AG04449 (cell line): ENCODE measurements at regions of chr14 and their contacts with region 1.

Region 1: GRCh38 chr14:22872033-22872832 is 693 bp downstream of the LRP10 start:
- DNase-seq: no peak
- H3K4me3 ChIP-seq: peak overlapping the region; percentile 81
- CTCF ChIP-seq: peak; percentile 87

Region 2: DNA sequence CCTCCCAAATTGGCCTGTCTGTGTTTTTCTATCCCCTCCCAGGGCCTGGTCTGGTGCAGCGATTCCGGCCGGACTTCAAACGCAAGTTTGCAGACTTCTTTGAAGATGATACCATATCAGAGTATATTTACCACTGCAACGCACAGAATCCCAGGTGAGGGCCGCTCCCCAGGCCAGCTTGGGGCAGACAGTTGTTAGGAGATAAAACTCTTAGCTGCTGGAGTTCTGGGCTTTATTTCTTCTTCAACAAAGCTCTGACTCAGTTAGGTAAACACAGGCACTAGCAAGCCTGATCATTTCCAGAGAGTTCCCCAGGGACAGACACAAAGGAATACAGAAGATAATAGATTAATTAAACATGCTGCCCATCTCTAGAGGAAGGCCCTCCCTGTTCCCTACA is 265.9 kb before region 1 on chr14:
- CTCF ChIA-PET with region 1: no interaction called
- POLR2A ChIA-PET with region 1: no interaction called
- DNase-seq: no peak
- H3K4me3 ChIP-seq: no peak overlapping the region
- CTCF ChIP-seq: no peak

Region 3: GRCh38 chr14:22689186-22689585 is 183.0 kb before region 1 on chr14:
- CTCF ChIA-PET with region 1: no interaction called
- POLR2A ChIA-PET with region 1: no interaction called
- DNase-seq: peak; percentile 92
- H3K4me3 ChIP-seq: no peak overlapping the region
- CTCF ChIP-seq: no peak

Region 4: GRCh38 chr14:22822571-22823098 is 49.6 kb before region 1 on chr14:
- CTCF ChIA-PET with region 1: interaction called, 34 read pairs
- POLR2A ChIA-PET with region 1: no interaction called
- DNase-seq: no peak
- H3K4me3 ChIP-seq: peak overlapping the region; percentile 24
- CTCF ChIP-seq: peak; percentile 78

Region 5: GRCh38 chr14:22836301-22837113 is 35.7 kb before region 1 on chr14 and contains the start of gene MMP14:
- CTCF ChIA-PET with region 1: interaction called, 13 read pairs
- POLR2A ChIA-PET with region 1: interaction called, 3 read pairs
- DNase-seq: no peak
- H3K4me3 ChIP-seq: peak within 1 kb of the TSS; percentile 90
- CTCF ChIP-seq: peak; percentile 58

Region 6: GRCh38 chr14:22886500-22887259 is 14.4 kb after region 1 on chr14:
- CTCF ChIA-PET with region 1: interaction called, 189 read pairs
- POLR2A ChIA-PET with region 1: interaction called, 6 read pairs
- DNase-seq: no peak
- H3K4me3 ChIP-seq: peak overlapping the region; percentile 57
- CTCF ChIP-seq: peak; percentile 32

Region 7: GRCh38 chr14:22892488-22892887 is 20.3 kb after region 1 on chr14:
- CTCF ChIA-PET with region 1: interaction called, 189 read pairs
- POLR2A ChIA-PET with region 1: interaction called, 4 read pairs
- DNase-seq: no peak
- H3K4me3 ChIP-seq: no peak overlapping the region
- CTCF ChIP-seq: no peak

Region 8: GRCh38 chr14:22918804-22919600 is 46.8 kb after region 1 on chr14 and contains the start of gene RBM23:
- CTCF ChIA-PET with region 1: interaction called, 28 read pairs
- POLR2A ChIA-PET with region 1: no interaction called
- DNase-seq: peak; percentile 99
- H3K4me3 ChIP-seq: peak within 1 kb of the TSS; percentile 76
- CTCF ChIP-seq: no peak

Region 9: DNA sequence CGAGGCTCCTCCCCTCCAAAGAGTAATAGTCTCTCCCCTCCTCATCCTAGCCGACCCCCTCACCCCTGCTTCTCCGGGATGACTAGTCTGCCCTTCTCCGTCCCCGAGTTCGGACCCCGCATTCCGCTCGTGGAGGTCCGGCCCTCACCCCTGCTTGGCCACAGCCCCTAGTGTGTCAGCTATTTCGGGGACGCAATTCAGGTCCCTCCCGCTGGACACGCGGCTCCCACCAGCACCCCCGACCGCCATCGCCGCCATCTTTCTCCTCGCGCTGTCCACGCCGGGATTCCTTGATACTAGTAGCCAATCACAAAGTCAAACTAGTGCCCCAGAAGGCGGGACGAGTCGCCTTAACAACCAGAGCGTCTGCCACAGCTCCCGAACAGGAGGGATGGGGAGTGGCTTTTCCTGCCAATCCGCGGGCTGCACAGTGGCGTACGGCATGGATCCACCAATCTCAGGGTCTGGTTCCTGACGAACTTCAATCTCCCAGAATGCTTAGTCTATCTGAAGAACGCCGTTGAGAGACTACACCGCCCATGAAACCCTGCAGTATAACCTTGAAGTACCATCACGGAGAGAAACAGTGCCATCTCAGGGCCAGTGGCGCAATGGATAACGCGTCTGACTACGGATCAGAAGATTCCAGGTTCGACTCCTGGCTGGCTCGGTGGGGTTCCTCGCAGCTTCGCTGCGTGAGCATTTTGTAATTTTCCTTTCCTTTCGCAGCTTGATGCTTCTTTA is 57.0 kb after region 1 on chr14 and contains the start of gene PRMT5:
- CTCF ChIA-PET with region 1: interaction called, 16 read pairs
- POLR2A ChIA-PET with region 1: no interaction called
- DNase-seq: peak; percentile 99
- H3K4me3 ChIP-seq: peak within 1 kb of the TSS; percentile 100
- CTCF ChIP-seq: no peak